ENCODE measurements at regions of chr6 and their contacts with region 1.

Region 1: GRCh38 chr6:110873981-110874879 is at the start of gene AMD1:
- DNase-seq: peak; percentile 97
- H3K4me3 Mint-ChIP-seq: peak within 1 kb of the TSS; percentile 96
- H3K27ac Mint-ChIP-seq: peak within 1 kb of the TSS; percentile 97
- H3K4me1 Mint-ChIP-seq: peaks cover 14% of the 10 kb centered on the region
- H3K27me3 Mint-ChIP-seq: no peaks in the 10 kb centered on the region
- CTCF ChIP-seq: no peak
- total RNA-seq, gene AMD1: 77.8 and 121 TPM in 2 replicates

Region 2: GRCh38 chr6:110528101-110528929 is 345.9 kb before region 1 on chr6:
- CTCF ChIA-PET with region 1: interaction called, 5 read pairs
- POLR2A ChIA-PET with region 1: interaction called, 7 read pairs
- intact Hi-C with region 1: loop called (anchors 1 kb)
- DNase-seq: peak; percentile 76
- H3K4me3 Mint-ChIP-seq: no peak overlapping the region
- H3K27ac Mint-ChIP-seq: peak overlapping the region; percentile 66
- H3K4me1 Mint-ChIP-seq: peaks cover 21% of the 10 kb centered on the region
- H3K27me3 Mint-ChIP-seq: no peaks in the 10 kb centered on the region
- CTCF ChIP-seq: peak; percentile 76

Region 3: GRCh38 chr6:110682460-110682853 is 191.8 kb before region 1 on chr6:
- CTCF ChIA-PET with region 1: interaction called, 53 read pairs
- POLR2A ChIA-PET with region 1: interaction called, 28 read pairs
- intact Hi-C with region 1: loop called (anchors 1 kb)
- DNase-seq: peak; percentile 87
- H3K4me3 Mint-ChIP-seq: no peak overlapping the region
- H3K27ac Mint-ChIP-seq: no peak overlapping the region
- H3K4me1 Mint-ChIP-seq: no peaks in the 10 kb centered on the region
- H3K27me3 Mint-ChIP-seq: no peaks in the 10 kb centered on the region
- CTCF ChIP-seq: peak; percentile 74

Region 4: GRCh38 chr6:110703010-110703905 is 171.0 kb before region 1 on chr6:
- CTCF ChIA-PET with region 1: interaction called, 10 read pairs
- POLR2A ChIA-PET with region 1: interaction called, 24 read pairs
- intact Hi-C with region 1: loop called (anchors 2 kb)
- DNase-seq: no peak
- H3K4me3 Mint-ChIP-seq: no peak overlapping the region
- H3K27ac Mint-ChIP-seq: peak overlapping the region; percentile 3
- H3K4me1 Mint-ChIP-seq: peaks cover 24% of the 10 kb centered on the region
- H3K27me3 Mint-ChIP-seq: no peaks in the 10 kb centered on the region
- CTCF ChIP-seq: no peak

Region 5: GRCh38 chr6:110853754-110854477 is 20.3 kb before region 1 on chr6:
- CTCF ChIA-PET with region 1: interaction called, 4 read pairs
- POLR2A ChIA-PET with region 1: interaction called, 45 read pairs
- intact Hi-C with region 1: no loop called
- DNase-seq: peak; percentile 72
- H3K4me3 Mint-ChIP-seq: no peak overlapping the region
- H3K27ac Mint-ChIP-seq: no peak overlapping the region
- H3K4me1 Mint-ChIP-seq: peaks cover 11% of the 10 kb centered on the region
- H3K27me3 Mint-ChIP-seq: no peaks in the 10 kb centered on the region
- CTCF ChIP-seq: no peak

Region 6: GRCh38 chr6:110944681-110945151 is 70.5 kb after region 1 on chr6:
- CTCF ChIA-PET with region 1: interaction called, 32 read pairs
- POLR2A ChIA-PET with region 1: interaction called, 31 read pairs
- intact Hi-C with region 1: loop called (anchors 1 kb)
- DNase-seq: peak; percentile 87
- H3K4me3 Mint-ChIP-seq: no peak overlapping the region
- H3K27ac Mint-ChIP-seq: peak overlapping the region; percentile 89
- H3K4me1 Mint-ChIP-seq: peaks cover 6% of the 10 kb centered on the region
- H3K27me3 Mint-ChIP-seq: no peaks in the 10 kb centered on the region
- CTCF ChIP-seq: no peak

Region 7: DNA sequence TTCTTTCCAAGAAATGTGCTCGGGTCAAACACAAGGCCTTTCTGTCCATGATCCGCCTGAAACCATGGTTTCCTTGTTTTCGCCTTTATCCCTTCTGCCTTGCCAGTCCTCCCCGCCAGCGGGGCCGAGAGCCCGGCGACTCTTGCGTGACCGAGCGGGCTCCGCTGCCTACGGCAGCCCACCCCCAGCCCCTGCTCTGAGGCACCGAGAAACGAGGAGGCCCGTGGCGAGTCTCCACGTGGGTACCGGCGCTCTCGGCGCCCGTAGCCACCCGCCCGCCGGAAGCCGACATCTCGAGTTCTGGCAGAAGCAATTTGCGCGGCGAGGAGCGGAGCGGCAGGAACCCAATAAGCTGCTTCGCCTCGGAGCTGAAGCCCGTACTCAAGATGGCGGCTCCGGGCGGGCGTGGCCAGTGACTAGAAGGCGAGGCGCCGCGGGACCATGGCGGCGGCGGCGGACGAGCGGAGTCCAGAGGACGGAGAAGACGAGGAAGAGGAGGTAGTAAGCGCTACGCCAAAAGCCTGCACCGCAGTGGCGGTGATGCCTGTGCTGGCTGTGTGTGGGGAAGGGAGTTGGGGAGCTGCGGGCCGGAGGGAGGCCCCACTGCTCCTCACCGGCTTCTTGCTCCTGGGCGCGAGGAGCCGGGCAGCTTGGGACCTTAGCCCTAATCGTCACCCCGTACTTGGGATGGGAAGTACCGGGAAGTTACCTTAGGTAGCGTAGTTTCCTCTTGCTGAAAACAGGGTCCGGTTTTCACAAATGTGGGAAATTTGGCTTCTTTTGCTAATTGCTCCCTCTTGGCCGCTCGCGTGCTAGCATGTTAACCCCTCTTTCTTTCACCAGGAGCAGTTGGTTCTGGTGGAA is 84.3 kb after region 1 on chr6 and contains the start of gene GTF3C6:
- CTCF ChIA-PET with region 1: interaction called, 3 read pairs
- POLR2A ChIA-PET with region 1: interaction called, 36 read pairs
- intact Hi-C with region 1: no loop called
- DNase-seq: peak; percentile 92
- H3K4me3 Mint-ChIP-seq: peak within 1 kb of the TSS; percentile 99
- H3K27ac Mint-ChIP-seq: peak within 1 kb of the TSS; percentile 100
- H3K4me1 Mint-ChIP-seq: no peaks in the 10 kb centered on the region
- H3K27me3 Mint-ChIP-seq: no peaks in the 10 kb centered on the region
- CTCF ChIP-seq: no peak
- total RNA-seq, gene GTF3C6: 96.8 and 96.9 TPM in 2 replicates

Measured in MCF 10A (cell line).